CD14-positive monocyte (primary cell): ENCODE measurements at regions of chr1 and their contacts with region 1.

Region 1: DNA sequence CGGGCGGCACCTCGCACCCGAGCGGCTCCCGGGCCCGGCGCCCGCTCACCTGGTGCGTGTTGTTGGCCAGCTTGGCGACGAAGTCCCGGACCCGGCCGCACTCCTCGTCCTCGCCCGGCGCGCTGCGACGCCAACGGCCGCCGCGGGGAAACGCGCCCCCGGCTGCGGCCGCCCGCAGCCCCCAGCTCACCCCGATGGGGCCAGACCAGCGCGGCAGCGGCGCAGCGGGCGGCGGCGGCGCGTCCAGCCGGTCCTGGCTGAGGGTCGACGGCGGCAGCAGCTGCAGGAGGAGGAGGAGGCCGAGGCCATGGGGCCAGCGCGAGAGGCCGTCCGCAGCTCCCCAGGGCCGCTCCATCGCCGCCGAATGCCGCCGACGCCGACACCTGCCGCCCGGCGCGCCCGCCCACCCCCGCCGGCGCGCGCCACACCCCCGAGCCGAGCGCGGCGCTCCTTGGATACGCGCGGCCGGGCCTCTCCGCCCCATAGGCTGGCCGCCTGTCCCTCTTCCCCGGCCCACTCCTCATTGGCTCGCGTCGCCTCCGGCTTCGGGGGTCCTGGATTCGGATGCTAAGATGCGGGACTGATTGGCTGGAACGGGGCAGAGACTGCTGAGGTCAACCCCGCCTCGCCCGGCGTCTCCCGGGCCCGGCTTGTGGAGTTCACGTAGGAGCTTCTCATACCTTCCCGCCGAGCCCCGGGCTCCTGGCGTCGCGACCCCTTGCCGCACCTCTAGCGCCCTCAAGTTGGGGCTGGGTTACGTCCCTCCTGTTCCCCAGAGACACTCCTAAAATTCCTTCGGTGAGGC is at the start of gene SORT1:
- DNase-seq: peak in 2 of 3 donors; percentile 35 to 36
- H3K4me3 ChIP-seq: peak within 1 kb of the TSS; percentile 27 to 83 (median 55)
- H3K4me3 Mint-ChIP-seq: peak within 1 kb of the TSS; percentile 94 to 96
- H3K27ac ChIP-seq: peak within 1 kb of the TSS; percentile 58 to 78
- H3K27ac Mint-ChIP-seq: peak within 1 kb of the TSS; percentile 86 to 95 (median 91)
- H3K4me1 ChIP-seq: peaks cover 45 to 54% of the 10 kb centered on the region in 2 donors
- H3K4me1 Mint-ChIP-seq: peaks cover 52% of the 10 kb centered on the region
- H3K27me3 ChIP-seq: no peaks in the 10 kb centered on the region
- H3K27me3 Mint-ChIP-seq: peaks cover 0 to 8% (median 3%) of the 10 kb centered on the region in 3 donors
- CTCF ChIP-seq: no peak
- polyA plus RNA-seq, gene SORT1: 21.3 to 41.1 (median 35.3) TPM

Region 2: GRCh38 chr1:109263597-109264398 is 133.9 kb before region 1 on chr1:
- intact Hi-C with region 1: loop called (anchors 5 kb)
- DNase-seq: peak; percentile 78 to 85 (median 79)
- H3K4me3 ChIP-seq: no peak overlapping the region
- H3K4me3 Mint-ChIP-seq: no peak overlapping the region
- H3K27ac ChIP-seq: no peak overlapping the region
- H3K27ac Mint-ChIP-seq: peak overlapping the region in 1 of 7 donors; percentile 32
- H3K4me1 ChIP-seq: peaks cover 5 to 7% of the 10 kb centered on the region in 2 donors
- H3K4me1 Mint-ChIP-seq: peaks cover 6% of the 10 kb centered on the region
- H3K27me3 ChIP-seq: no peaks in the 10 kb centered on the region
- H3K27me3 Mint-ChIP-seq: peaks cover 0 to 9% (median 8%) of the 10 kb centered on the region in 3 donors
- CTCF ChIP-seq: peak; percentile 97

Region 3: DNA sequence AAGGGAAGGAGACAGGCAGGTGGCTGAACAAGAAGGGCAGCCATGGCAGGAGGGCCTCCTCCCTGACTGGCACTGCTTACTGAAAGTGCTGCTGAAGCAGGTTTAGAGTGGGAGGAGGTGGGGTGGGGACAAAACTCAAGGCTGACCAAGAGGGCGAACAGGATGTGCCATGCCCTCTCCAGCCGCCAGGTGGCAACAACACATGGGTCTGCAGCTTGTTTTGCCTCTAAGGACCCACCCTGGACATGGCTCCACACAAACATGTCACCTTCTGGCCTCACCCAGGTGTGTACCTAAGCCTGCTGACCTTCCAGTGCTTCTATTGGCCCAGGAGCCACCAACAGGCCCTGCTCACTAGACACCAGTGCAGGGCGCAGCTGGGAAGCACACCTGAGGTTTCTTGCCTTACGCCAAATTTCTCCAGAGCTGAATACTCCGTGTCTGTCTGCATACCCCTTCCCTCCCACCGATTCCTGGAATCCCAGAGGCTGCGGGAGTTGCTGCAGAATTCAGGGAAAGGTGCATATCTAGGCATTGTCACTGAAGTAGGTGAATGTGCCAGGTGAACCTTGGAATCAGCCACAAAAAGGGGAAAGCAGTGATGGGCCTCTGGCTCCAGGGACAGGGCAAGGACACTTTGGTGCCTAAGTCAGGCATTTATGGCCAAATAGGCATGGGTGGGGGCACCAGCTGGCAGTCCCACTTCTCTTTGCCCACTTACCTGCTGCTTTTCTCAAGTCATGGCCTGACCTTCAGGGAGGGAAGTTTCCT is 120.1 kb before region 1 on chr1:
- intact Hi-C with region 1: loop called (anchors 2 kb)
- DNase-seq: peak; percentile 42 to 62 (median 58)
- H3K4me3 ChIP-seq: no peak overlapping the region
- H3K4me3 Mint-ChIP-seq: no peak overlapping the region
- H3K27ac ChIP-seq: no peak overlapping the region
- H3K27ac Mint-ChIP-seq: peak overlapping the region in 1 of 7 donors; percentile 48
- H3K4me1 ChIP-seq: peaks cover 39 to 52% of the 10 kb centered on the region in 2 donors
- H3K4me1 Mint-ChIP-seq: peaks cover 61% of the 10 kb centered on the region
- H3K27me3 ChIP-seq: no peaks in the 10 kb centered on the region
- H3K27me3 Mint-ChIP-seq: peaks cover 4 to 10% (median 8%) of the 10 kb centered on the region in 3 donors
- CTCF ChIP-seq: peak; percentile 98

Region 4: DNA sequence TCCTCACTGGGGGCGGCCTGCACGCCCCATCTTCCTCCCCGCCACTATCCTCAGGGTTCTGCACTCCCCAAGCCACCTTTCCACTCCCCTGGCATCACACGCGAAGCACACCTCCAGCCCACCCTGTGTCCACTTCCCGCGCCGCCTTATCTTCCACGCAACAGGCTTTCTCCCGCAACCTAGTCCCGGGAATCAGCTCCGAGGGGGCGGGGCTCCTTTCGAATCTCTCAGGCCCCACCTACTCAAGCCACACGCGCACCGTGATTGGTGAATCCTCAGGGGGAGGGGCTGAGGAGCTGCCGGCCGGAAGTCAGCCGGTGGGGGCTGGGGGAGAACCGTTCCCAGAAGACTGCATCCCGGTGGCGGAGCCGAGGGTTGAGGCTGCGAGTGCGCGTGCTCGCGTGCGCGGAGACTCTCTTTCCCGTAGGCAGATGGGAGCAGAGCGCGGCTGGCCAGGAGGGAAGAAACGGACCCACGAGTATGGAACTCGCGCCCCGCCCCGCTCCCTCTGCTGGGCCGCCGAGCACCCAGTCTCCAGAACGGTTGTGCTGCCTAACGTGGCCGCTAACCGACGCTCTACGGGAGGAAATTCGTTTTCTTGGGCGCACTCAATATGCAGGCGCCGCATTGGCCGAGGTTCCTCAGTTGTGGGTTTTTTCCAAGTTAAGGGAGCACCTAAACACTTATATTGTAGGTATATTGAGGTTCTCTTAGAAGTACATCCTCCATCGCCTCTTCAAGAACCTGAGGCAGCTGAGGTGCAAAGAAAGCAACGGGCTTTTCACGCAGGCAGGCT is 114.6 kb before region 1 on chr1 and contains the start of gene PSRC1:
- intact Hi-C with region 1: loop called in 1 of 2 experiments (anchors 2 kb)
- DNase-seq: peak; percentile 79 to 86 (median 81)
- H3K4me3 ChIP-seq: peak within 1 kb of the TSS; percentile 61 to 87 (median 77)
- H3K4me3 Mint-ChIP-seq: peak within 1 kb of the TSS; percentile 97 to 100
- H3K27ac ChIP-seq: peak within 1 kb of the TSS; percentile 82 to 85
- H3K27ac Mint-ChIP-seq: peak within 1 kb of the TSS; percentile 87 to 97 (median 95)
- H3K4me1 ChIP-seq: peaks cover 39 to 42% of the 10 kb centered on the region in 2 donors
- H3K4me1 Mint-ChIP-seq: peaks cover 42% of the 10 kb centered on the region
- H3K27me3 ChIP-seq: no peaks in the 10 kb centered on the region
- H3K27me3 Mint-ChIP-seq: no peaks in the 10 kb centered on the region
- CTCF ChIP-seq: peak; percentile 71
- polyA plus RNA-seq, gene PSRC1: 5.8 to 25.5 (median 7.1) TPM

Region 5: DNA sequence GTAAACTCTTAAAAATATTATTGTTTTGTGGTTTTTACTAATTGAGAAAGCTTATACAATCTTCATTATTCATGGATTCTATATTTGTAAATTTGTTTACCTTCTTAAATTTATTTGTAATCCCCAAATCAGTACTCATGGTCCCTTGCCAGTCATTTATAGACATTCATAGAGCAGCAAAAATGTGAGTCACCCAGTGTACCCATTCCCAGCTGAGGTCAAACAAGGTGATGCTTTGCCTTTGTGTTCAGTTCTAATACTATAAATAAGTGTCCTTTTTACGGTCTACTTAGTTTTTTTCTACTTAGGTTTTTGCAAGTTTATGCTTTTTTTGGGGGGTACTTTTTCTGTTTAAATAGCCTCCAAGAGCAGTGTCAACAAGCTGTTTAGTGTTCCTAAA is 36.1 kb before region 1 on chr1:
- intact Hi-C with region 1: loop called (anchors 5 kb)
- DNase-seq: no peak
- H3K4me3 ChIP-seq: no peak overlapping the region
- H3K4me3 Mint-ChIP-seq: no peak overlapping the region
- H3K27ac ChIP-seq: peak overlapping the region in 1 of 2 donors; percentile 70
- H3K27ac Mint-ChIP-seq: peak overlapping the region in 1 of 7 donors; percentile 67
- H3K4me1 ChIP-seq: peaks cover 26 to 33% of the 10 kb centered on the region in 2 donors
- H3K4me1 Mint-ChIP-seq: peaks cover 32% of the 10 kb centered on the region
- H3K27me3 ChIP-seq: no peaks in the 10 kb centered on the region
- H3K27me3 Mint-ChIP-seq: peaks cover 0 to 2% (median 0%) of the 10 kb centered on the region in 3 donors
- CTCF ChIP-seq: no peak